ENCODE measurements at regions of chr15 and their contacts with region 1.

Region 1: GRCh38 chr15:22786868-22787698 is 639 bp downstream of the NIPA1 start:
- DNase-seq: peak in 2 of 5 donors; percentile 9 to 35
- H3K4me3 ChIP-seq: peak overlapping the region; percentile 83
- H3K27ac ChIP-seq: no peak overlapping the region
- H3K4me1 ChIP-seq: no peaks in the 10 kb centered on the region
- H3K27me3 ChIP-seq: no peaks in the 10 kb centered on the region
- CTCF ChIP-seq: no peak
- EP300 ChIP-seq: no peak
- POLR2A ChIP-seq: no peak

Region 2: GRCh38 chr15:22838292-22839042 is 51.4 kb after region 1 on chr15 and contains the start of gene NIPA2:
- intact Hi-C with region 1: loop called in 2 of 4 experiments (anchors 5 to 10 kb)
- DNase-seq: peak; percentile 98 to 100 (median 99)
- H3K4me3 ChIP-seq: peak within 1 kb of the TSS; percentile 84
- H3K27ac ChIP-seq: peak within 1 kb of the TSS; percentile 76 to 94
- H3K4me1 ChIP-seq: peaks cover 5% of the 10 kb centered on the region
- H3K27me3 ChIP-seq: no peaks in the 10 kb centered on the region
- CTCF ChIP-seq: no peak
- EP300 ChIP-seq: peak; percentile 48
- POLR2A ChIP-seq: peak; percentile 85
- total RNA-seq, gene NIPA2: 17.9 to 42.1 (median 30.2) TPM

Region 3: DNA sequence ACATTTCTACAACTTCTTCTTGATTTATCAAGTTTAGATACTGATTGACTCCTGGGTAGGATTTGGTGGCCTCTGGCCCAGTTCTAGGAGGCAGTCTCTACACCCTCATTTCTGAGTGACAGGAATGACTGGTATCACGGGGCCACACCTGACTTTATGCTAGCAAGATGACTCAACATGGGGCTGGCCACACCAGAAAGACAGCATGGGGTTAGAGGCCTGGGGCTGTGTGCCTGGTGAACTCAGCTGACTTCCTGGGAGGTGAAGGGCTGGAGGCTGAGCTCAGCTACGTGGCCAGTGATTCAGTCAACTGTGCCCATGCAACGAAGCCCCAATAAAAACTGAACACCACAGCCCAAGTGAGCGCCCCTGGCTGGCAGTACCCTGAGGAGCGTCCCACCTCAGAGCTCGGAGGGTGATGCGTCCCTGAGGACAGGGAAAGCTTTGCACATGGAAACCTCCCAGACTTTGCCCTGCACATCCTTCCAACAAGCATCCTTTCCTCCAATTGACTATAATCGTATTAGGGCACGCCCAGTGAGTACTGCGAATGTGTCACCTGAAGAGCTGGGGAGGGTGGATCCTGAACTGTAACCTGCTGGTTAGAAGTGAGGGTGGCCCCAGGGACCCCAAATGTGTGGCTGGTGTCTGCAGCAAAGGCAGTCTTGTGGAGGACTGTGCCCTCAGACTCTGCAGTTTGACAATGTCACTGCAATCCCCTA is 108.5 kb after region 1 on chr15:
- intact Hi-C with region 1: loop called in 1 of 4 experiments (anchors 5 kb)
- DNase-seq: no peak
- H3K4me3 ChIP-seq: no peak overlapping the region
- H3K27ac ChIP-seq: no peak overlapping the region
- H3K4me1 ChIP-seq: no peaks in the 10 kb centered on the region
- H3K27me3 ChIP-seq: no peaks in the 10 kb centered on the region
- CTCF ChIP-seq: no peak
- EP300 ChIP-seq: no peak
- POLR2A ChIP-seq: no peak

Measured in ovary (tissue), 10 donors.